PC-9 (cell line): ENCODE measurements at regions of chr16 and their contacts with region 1.

Region 1: DNA sequence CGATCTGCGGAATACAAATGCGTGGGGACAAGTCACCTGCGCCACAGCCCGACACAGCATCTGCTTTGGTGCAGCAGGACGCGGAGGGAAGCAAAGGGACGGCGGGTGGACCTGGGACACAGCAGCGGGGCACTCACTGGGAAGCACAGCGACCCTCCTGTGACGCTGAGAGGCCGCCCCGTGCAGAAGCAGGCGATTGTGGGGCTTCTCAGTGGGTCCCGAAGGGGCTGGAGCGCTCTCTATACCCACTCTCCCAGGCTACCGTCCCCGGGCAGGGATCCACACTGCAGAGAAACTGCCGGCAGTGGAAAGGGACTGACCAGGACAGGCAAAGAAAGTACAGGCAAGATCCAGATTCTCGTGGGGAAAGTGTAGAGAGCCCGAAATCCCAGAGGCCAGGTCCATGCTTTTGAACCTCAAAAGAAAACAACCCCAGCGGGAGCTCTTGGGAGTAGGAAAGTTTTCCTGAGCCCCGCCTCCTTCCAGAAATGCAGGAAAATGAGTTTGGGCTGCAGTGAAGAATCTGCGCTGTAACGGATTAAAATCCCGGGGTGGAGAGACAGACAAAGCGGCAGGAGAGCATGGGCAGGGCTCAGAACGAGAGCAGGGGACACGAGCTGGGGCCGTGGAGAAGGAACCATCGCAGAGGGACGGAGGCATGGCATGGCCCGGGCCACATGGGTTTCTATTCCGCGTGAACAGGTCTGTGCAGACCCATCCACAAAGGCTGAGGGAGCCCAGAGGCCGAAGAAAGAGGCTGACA is 12.7 kb downstream of the COX4I1 start:
- DNase-seq: no peak
- H3K4me3 ChIP-seq: no peak overlapping the region
- H3K27ac ChIP-seq: no peak overlapping the region
- H3K4me1 ChIP-seq: no peaks in the 10 kb centered on the region
- H3K27me3 ChIP-seq: peaks cover 48% of the 10 kb centered on the region
- CTCF ChIP-seq: no peak

Region 2: DNA sequence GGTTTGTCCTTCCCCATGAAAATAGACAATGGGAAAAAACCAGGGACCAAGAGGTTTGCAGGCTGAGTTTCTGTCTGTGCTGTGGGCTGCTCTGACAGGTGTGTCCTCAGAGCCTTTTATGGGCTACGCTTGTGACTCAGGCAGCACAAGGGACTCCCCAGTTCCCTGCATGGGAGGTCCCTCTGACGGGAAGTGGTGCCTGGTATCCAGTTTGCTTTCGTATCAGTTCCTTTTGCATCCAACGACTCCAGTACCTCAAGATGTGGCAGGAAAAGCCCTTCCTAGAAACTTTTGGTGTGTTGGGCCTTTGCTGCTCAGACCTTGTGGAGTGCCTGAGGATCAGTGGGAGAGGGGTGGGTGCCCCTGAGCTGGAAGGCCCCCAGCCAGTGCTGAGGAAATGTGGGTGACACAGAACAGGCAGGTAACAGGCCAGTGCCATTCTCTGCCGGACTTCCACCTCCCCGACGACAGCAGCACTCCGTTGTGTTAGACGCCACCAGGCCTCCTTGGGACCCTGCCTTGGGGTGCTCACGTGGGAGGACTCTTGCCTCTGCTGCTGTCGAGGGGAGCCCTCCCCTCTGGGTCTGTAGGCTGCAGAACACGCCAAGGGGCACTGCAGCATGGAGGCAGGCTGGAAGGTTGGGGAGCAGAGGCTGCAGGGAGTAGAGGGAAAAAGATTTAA is 48.3 kb after region 1 on chr16:
- CTCF ChIA-PET with region 1: no interaction called
- POLR2A ChIA-PET with region 1: no interaction called
- intact Hi-C with region 1: no loop called
- DNase-seq: no peak
- H3K4me3 ChIP-seq: no peak overlapping the region
- H3K27ac ChIP-seq: no peak overlapping the region
- H3K4me1 ChIP-seq: no peaks in the 10 kb centered on the region
- H3K27me3 ChIP-seq: peaks cover 94% of the 10 kb centered on the region
- CTCF ChIP-seq: no peak

Region 3: DNA sequence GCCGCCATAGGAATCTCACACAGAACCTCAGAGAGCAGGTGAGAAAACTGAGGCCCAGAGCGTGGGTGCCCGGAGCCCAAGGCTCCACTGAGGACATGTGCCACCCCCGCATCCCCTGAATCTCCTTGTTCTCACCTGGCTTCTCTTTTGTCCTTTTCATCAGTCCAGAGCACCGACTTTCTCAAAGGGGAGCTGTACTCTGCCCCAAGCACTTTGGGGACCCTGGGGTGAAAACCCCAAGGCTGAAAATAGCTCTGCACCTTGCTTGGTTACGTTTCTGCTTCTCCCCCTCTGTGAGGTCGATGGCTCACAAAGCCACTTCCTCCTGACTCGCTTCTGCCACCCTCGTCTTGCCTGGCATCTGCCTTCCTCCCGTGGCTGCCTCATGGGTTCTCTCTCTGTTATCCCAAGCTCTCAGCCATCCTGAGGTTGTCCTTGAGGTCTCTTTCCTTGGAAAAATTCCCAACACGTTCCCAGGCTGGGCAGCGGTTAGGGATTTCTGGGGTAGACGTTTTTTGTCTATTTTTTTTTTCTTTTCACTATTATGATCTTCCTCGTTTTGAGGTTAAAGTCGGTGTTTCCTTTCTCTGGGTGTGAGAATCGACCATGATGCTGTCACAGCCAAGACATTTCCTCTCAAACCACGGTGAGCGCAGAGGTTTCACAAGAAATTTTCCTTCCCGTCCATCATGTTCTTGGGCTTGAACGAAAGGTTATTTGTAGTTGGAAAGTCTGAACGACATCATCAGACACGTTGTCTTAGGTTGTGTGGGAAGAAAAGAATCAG is 124.0 kb after region 1 on chr16:
- CTCF ChIA-PET with region 1: no interaction called
- POLR2A ChIA-PET with region 1: interaction called, 16 read pairs
- intact Hi-C with region 1: no loop called
- DNase-seq: no peak
- H3K4me3 ChIP-seq: no peak overlapping the region
- H3K27ac ChIP-seq: no peak overlapping the region
- H3K4me1 ChIP-seq: no peaks in the 10 kb centered on the region
- H3K27me3 ChIP-seq: peaks cover 96% of the 10 kb centered on the region
- CTCF ChIP-seq: no peak